Activated T-helper 1 cell treated with anti-CD3 and anti-CD28 coated beads, Interleukin-12 subunit alpha, Interleukin-12 subunit beta, Interleukin-2, Interleukin-4 antibody, amounts not matched to agents 30 ng/mL and 10 ng/mL and 1 ng/mL, durations not matched to agents 14 hours and 24 hours and 36 hours (primary cell): ENCODE measurements at regions of chr10 and their contacts with region 1.

Region 1: GRCh38 chr10:24603333-24603732 is 120.4 kb downstream of the ARHGAP21 start:
- DNase-seq: no peak
- H3K4me3 Mint-ChIP-seq: peak overlapping the region; percentile 45
- H3K27ac Mint-ChIP-seq: peak overlapping the region; percentile 95
- H3K4me1 Mint-ChIP-seq: peaks cover 38% of the 10 kb centered on the region
- H3K27me3 Mint-ChIP-seq: no peaks in the 10 kb centered on the region

Region 2: GRCh38 chr10:23368816-23369640 is 1234.3 kb before region 1 on chr10:
- intact Hi-C with region 1: loop called (anchors 10 kb)
- DNase-seq: peak; percentile 42
- H3K4me3 Mint-ChIP-seq: peak overlapping the region; percentile 63
- H3K27ac Mint-ChIP-seq: peak overlapping the region; percentile 79
- H3K4me1 Mint-ChIP-seq: peaks cover 64% of the 10 kb centered on the region
- H3K27me3 Mint-ChIP-seq: peaks cover 2% of the 10 kb centered on the region

Region 3: DNA sequence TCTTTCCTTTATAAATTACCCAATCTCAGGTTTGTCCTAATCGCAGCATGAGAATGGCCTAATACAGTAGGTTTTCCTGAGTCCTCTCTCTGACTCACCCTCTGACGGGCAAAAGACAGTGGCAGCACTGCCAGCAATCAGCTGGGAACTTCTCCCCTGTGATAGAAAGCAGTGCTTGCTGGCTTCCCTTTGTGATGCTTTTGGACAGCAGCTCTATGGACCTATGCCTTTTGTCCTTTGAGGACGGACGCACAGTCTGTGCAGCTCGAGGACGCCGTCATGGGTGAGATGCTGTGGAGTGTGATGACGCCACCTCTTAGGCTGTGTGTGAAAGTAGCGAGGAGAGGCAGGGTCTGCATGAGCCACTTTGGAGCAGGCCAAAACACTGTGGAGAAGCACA is 325.6 kb before region 1 on chr10:
- intact Hi-C with region 1: no loop called
- DNase-seq: no peak
- H3K4me3 Mint-ChIP-seq: no peak overlapping the region
- H3K27ac Mint-ChIP-seq: no peak overlapping the region
- H3K4me1 Mint-ChIP-seq: no peaks in the 10 kb centered on the region
- H3K27me3 Mint-ChIP-seq: no peaks in the 10 kb centered on the region

Region 4: GRCh38 chr10:24449321-24449740 is 154.0 kb before region 1 on chr10:
- intact Hi-C with region 1: no loop called
- DNase-seq: no peak
- H3K4me3 Mint-ChIP-seq: peak overlapping the region; percentile 4
- H3K27ac Mint-ChIP-seq: peak overlapping the region; percentile 72
- H3K4me1 Mint-ChIP-seq: peaks cover 41% of the 10 kb centered on the region
- H3K27me3 Mint-ChIP-seq: peaks cover 14% of the 10 kb centered on the region

Region 5: GRCh38 chr10:24556750-24557742 is 46.3 kb before region 1 on chr10:
- intact Hi-C with region 1: no loop called
- DNase-seq: no peak
- H3K4me3 Mint-ChIP-seq: no peak overlapping the region
- H3K27ac Mint-ChIP-seq: no peak overlapping the region
- H3K4me1 Mint-ChIP-seq: peaks cover 6% of the 10 kb centered on the region
- H3K27me3 Mint-ChIP-seq: peaks cover 2% of the 10 kb centered on the region

Region 6: DNA sequence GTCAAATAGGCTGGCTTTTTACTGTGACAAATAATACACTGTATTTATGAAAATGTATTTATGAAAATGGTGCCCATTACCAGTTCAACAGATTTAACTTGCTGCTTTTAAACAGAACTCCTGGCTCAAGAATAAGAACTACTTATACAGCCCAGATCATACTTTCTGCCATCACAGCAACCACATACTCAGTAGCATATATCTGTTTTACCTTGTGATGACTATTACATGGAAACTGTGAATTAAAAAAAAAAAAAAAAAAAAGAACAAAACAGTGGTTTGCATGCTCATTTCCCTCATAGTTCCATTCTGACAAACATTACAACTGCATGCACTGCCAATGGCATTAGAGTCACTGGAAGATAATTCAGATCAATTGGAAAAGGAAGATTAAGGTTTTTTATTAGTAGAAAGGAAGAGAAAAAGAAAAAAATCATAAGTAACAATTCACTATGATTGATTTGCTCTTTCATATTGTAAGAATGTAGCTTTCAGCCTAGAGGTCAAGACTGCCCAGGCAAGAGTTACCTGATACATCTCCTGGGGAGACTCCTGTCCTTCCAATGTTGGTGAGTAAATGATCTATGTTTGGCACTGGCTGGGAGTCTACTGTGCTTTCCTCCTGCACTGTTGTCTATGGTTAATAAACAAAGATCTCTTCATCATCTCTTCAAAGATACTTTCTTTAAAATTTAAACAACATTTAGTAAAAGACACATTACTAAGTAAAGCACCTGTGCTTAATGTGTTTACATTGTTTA is 12.5 kb before region 1 on chr10:
- intact Hi-C with region 1: loop called (anchors 1 kb)
- DNase-seq: no peak
- H3K4me3 Mint-ChIP-seq: no peak overlapping the region
- H3K27ac Mint-ChIP-seq: no peak overlapping the region
- H3K4me1 Mint-ChIP-seq: peaks cover 18% of the 10 kb centered on the region
- H3K27me3 Mint-ChIP-seq: no peaks in the 10 kb centered on the region

Region 7: GRCh38 chr10:24617771-24618391 is 14.5 kb after region 1 on chr10:
- intact Hi-C with region 1: loop called (anchors 1 kb)
- DNase-seq: no peak
- H3K4me3 Mint-ChIP-seq: no peak overlapping the region
- H3K27ac Mint-ChIP-seq: peak overlapping the region; percentile 74
- H3K4me1 Mint-ChIP-seq: peaks cover 29% of the 10 kb centered on the region
- H3K27me3 Mint-ChIP-seq: no peaks in the 10 kb centered on the region

Region 8: DNA sequence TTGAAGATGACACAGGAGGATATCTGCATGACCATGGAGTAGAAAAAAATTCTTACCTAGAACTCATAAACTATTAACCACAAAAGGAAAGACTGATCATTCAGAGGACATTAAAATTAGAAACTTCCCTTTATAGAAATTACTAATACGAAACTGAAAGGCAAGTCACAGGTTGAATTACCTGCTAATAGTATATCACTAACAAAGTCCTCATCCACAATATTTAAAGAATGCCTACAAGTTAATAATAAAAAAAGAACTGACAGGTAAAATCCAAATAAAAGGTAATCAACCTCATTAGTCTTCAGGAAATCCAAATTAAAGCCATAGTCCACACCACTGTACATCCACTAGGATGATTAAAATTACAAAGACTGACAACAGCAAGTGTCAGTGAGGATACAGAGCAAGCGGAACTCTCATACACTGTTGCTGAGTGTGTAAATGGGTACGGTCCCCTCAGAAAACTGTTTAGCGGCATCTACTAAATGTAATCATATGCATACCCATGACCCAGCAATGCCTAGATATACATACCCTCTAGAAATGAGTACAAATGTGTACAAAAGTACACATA is 49.1 kb after region 1 on chr10:
- intact Hi-C with region 1: loop called (anchors 2 kb)
- DNase-seq: no peak
- H3K4me3 Mint-ChIP-seq: no peak overlapping the region
- H3K27ac Mint-ChIP-seq: no peak overlapping the region
- H3K4me1 Mint-ChIP-seq: peaks cover 10% of the 10 kb centered on the region
- H3K27me3 Mint-ChIP-seq: no peaks in the 10 kb centered on the region